ENCODE measurements at regions of chr4 and their contacts with region 1.

Region 1: DNA sequence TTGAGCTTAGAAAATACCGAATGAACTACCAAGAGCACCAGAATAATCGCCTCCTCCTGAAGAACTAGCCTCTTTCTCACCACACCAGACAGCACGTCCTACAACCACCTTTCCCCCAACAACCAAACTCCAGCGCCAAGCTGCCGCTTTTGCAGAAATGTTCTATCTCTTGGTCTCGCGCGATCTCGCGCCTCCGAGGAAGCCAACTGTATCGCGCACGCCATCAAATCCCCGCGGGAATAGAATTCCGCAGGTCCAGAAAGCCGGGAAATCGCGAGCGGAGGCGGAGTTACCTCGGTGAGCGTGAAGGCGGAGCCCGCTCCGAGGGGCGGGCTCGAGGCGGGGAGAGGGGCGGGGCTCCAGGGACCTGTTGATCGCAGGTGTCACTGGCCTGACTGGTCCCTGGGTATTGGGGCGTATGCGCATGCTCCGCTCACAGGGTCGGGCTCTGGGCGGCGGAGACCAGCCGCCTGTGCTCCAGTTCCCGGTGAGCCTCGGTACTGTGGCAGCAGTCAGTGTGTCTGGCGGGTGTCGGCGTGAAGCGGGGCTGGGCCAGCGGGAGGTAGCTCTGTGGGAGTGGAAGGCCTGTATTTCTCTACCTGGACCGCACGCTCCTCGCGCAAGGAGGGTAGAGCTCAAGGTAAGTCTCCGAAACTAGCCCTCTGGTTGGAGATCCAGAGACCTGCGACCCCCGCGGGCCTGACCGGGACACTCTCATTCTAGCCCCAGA is at the start of gene USP53:
- DNase-seq: peak; percentile 98
- ATAC-seq: peak; percentile 92
- H3K4me3 ChIP-seq: peak within 1 kb of the TSS; percentile 65 to 91 (median 76)
- H3K4me3 Mint-ChIP-seq: peak within 1 kb of the TSS; percentile 95
- H3K27ac ChIP-seq: peak within 1 kb of the TSS; percentile 76 to 81
- H3K27ac Mint-ChIP-seq: peak within 1 kb of the TSS; percentile 96
- H3K4me1 ChIP-seq: peaks cover 2 to 15% of the 10 kb centered on the region in 2 donors
- H3K4me1 Mint-ChIP-seq: peaks cover 39% of the 10 kb centered on the region
- H3K27me3 ChIP-seq: no peaks in the 10 kb centered on the region
- H3K27me3 Mint-ChIP-seq: no peaks in the 10 kb centered on the region
- CTCF ChIP-seq: no peak
- total RNA-seq, gene USP53: 45.0 and 57.1 TPM in 2 replicates

Region 2: DNA sequence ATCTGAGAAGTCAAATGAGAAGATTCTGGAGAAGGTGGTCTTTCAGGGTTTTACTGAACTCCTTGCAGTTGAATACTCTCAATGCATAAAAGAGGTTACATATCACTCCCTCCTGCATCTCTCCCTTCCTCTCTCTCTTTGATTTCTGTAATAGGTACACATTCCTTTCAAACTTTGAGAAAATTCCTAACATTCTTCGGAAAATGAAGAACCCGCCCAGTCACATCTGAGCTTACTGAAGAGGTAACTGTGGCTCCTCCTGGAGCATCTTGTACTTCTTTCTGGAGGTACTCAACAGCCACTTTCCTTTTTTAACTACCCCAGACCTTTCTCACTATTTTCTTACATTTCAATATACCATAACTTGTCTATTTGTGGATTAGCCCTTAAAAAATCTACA is 1153.4 kb before region 1 on chr4:
- CTCF ChIA-PET with region 1: no interaction called
- POLR2A ChIA-PET with region 1: no interaction called
- intact Hi-C with region 1: no loop called
- DNase-seq: no peak
- ATAC-seq: no peak
- H3K4me3 ChIP-seq: no peak overlapping the region
- H3K4me3 Mint-ChIP-seq: no peak overlapping the region
- H3K27ac ChIP-seq: no peak overlapping the region
- H3K27ac Mint-ChIP-seq: no peak overlapping the region
- H3K4me1 ChIP-seq: no peaks in the 10 kb centered on the region
- H3K4me1 Mint-ChIP-seq: no peaks in the 10 kb centered on the region
- H3K27me3 ChIP-seq: no peaks in the 10 kb centered on the region
- H3K27me3 Mint-ChIP-seq: no peaks in the 10 kb centered on the region
- CTCF ChIP-seq: no peak

Region 3: DNA sequence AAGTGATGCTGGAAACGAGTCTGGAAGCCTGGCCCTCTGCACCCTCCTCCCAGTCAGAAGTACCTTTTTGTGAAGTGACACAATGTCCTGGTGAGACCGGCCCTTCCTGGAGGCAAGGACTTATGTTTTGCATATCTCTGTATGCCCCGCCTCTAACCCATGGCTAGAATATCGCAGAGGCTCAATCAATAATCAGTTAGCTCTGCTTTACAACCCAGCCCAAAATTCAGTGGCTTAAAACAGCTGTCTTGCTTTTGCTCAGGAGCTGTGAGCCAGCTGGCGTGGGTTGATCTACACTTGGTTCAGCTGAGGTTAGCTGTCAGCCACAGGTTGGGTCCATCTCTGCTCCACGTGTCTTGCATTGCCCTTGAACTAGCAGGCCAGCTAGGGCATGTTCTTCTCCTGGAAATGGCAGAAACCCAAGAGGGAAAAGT is 626.0 kb before region 1 on chr4:
- CTCF ChIA-PET with region 1: no interaction called
- POLR2A ChIA-PET with region 1: no interaction called
- intact Hi-C with region 1: loop called (anchors 5 kb)
- DNase-seq: no peak
- ATAC-seq: no peak
- H3K4me3 ChIP-seq: no peak overlapping the region
- H3K4me3 Mint-ChIP-seq: no peak overlapping the region
- H3K27ac ChIP-seq: no peak overlapping the region
- H3K27ac Mint-ChIP-seq: no peak overlapping the region
- H3K4me1 ChIP-seq: peaks cover 0 to 6% of the 10 kb centered on the region in 2 donors
- H3K4me1 Mint-ChIP-seq: peaks cover 9% of the 10 kb centered on the region
- H3K27me3 ChIP-seq: peaks cover 0 to 15% (median 4%) of the 10 kb centered on the region in 4 experiments
- H3K27me3 Mint-ChIP-seq: peaks cover 27% of the 10 kb centered on the region
- CTCF ChIP-seq: no peak

Region 4: GRCh38 chr4:118760493-118760892 is 451.9 kb before region 1 on chr4:
- CTCF ChIA-PET with region 1: no interaction called
- POLR2A ChIA-PET with region 1: no interaction called
- intact Hi-C with region 1: loop called (anchors 1 kb)
- DNase-seq: peak; percentile 72
- ATAC-seq: peak; percentile 94
- H3K4me3 ChIP-seq: no peak overlapping the region
- H3K4me3 Mint-ChIP-seq: peak overlapping the region; percentile 17
- H3K27ac ChIP-seq: no peak overlapping the region
- H3K27ac Mint-ChIP-seq: peak overlapping the region; percentile 65
- H3K4me1 ChIP-seq: peaks cover 14 to 19% of the 10 kb centered on the region in 2 donors
- H3K4me1 Mint-ChIP-seq: peaks cover 26% of the 10 kb centered on the region
- H3K27me3 ChIP-seq: no peaks in the 10 kb centered on the region
- H3K27me3 Mint-ChIP-seq: no peaks in the 10 kb centered on the region
- CTCF ChIP-seq: no peak

Region 5: DNA sequence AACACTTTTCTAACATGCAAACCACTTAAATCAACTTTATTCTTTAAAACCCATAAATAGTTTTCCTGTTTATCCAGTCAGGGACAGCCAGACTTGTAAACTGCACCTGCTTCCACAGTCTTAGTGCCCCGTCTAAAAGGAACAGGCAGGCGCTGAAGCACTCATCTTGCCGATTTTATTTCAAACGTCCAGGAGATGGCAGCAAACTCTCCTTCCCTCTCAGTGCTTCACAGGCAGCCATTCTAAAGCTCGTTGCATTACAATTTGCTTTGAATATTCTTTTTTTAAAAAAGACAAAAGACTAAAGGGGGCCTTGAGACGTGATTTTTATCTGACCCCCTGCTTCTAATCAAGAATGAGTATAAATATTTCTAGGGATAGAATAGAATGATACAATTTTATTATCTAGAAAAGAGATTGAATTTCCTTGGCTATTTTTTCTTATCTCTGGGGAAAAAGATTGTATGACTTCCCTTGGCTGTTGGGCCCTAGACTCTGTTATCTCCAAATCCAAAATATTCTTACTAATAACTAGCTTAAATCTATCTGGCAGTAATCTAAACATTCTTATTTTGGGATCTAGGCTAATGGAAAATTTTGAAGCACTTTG is 170.3 kb before region 1 on chr4:
- CTCF ChIA-PET with region 1: interaction called, 16 read pairs
- POLR2A ChIA-PET with region 1: no interaction called
- intact Hi-C with region 1: loop called (anchors 2 kb)
- DNase-seq: peak; percentile 74
- ATAC-seq: peak; percentile 81
- H3K4me3 ChIP-seq: no peak overlapping the region
- H3K4me3 Mint-ChIP-seq: no peak overlapping the region
- H3K27ac ChIP-seq: no peak overlapping the region
- H3K27ac Mint-ChIP-seq: no peak overlapping the region
- H3K4me1 ChIP-seq: peaks cover 0 to 4% of the 10 kb centered on the region in 2 donors
- H3K4me1 Mint-ChIP-seq: peaks cover 6% of the 10 kb centered on the region
- H3K27me3 ChIP-seq: no peaks in the 10 kb centered on the region
- H3K27me3 Mint-ChIP-seq: no peaks in the 10 kb centered on the region
- CTCF ChIP-seq: peak; percentile 88

Region 6: DNA sequence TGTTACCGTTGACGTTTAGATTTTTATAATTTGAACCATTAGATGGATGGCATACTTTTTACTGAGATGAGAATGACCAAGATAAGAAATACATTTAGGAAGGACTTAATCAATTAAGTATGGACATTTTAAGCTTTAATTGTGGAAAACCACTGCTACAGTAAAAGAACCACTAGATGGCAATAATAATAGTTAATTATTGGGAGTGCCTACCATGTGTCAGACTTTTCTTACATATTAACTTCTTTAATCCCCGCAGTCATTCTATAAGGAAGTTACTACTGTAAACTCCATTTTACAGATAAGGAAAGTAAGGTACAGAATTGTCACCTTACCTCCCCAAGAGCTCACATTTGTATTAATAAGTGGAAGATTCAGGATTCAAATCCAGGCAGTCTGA is 125.3 kb before region 1 on chr4:
- CTCF ChIA-PET with region 1: interaction called, 10 read pairs
- POLR2A ChIA-PET with region 1: no interaction called
- intact Hi-C with region 1: loop called (anchors 5 kb)
- DNase-seq: no peak
- ATAC-seq: no peak
- H3K4me3 ChIP-seq: no peak overlapping the region
- H3K4me3 Mint-ChIP-seq: no peak overlapping the region
- H3K27ac ChIP-seq: no peak overlapping the region
- H3K27ac Mint-ChIP-seq: no peak overlapping the region
- H3K4me1 ChIP-seq: no peaks in the 10 kb centered on the region
- H3K4me1 Mint-ChIP-seq: peaks cover 28% of the 10 kb centered on the region
- H3K27me3 ChIP-seq: no peaks in the 10 kb centered on the region
- H3K27me3 Mint-ChIP-seq: peaks cover 7% of the 10 kb centered on the region
- CTCF ChIP-seq: no peak

Region 7: GRCh38 chr4:119300101-119300978 is 87.9 kb after region 1 on chr4:
- CTCF ChIA-PET with region 1: no interaction called
- POLR2A ChIA-PET with region 1: interaction called, 16 read pairs
- intact Hi-C with region 1: loop called (anchors 1 kb)
- DNase-seq: peak; percentile 95
- ATAC-seq: peak; percentile 93
- H3K4me3 ChIP-seq: peak overlapping the region; percentile 87 to 97 (median 94)
- H3K4me3 Mint-ChIP-seq: peak overlapping the region; percentile 92
- H3K27ac ChIP-seq: peak overlapping the region; percentile 91 to 92
- H3K27ac Mint-ChIP-seq: peak overlapping the region; percentile 95
- H3K4me1 ChIP-seq: peaks cover 17 to 21% of the 10 kb centered on the region in 2 donors
- H3K4me1 Mint-ChIP-seq: peaks cover 30% of the 10 kb centered on the region
- H3K27me3 ChIP-seq: no peaks in the 10 kb centered on the region
- H3K27me3 Mint-ChIP-seq: peaks cover 5% of the 10 kb centered on the region
- CTCF ChIP-seq: no peak

Region 8: DNA sequence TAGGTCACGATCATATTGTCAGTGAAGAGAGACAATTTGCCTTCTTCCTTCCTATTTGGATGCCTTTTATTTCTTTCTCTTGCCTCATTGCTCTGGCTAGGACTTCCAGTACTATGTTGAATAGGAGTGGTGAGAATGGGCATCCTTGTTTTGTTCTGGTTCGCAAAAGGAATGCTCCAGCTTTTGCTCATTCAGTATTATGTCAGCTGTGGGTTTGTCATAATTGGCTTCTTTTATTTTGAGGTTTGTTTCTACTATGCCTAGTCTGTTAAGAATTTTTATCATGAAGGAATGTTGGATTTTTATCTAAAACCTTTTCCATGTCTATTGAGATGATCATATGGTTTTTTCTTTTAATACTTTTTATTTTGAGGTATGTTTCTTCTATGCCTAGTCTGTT is 1006.6 kb after region 1 on chr4:
- CTCF ChIA-PET with region 1: no interaction called
- POLR2A ChIA-PET with region 1: no interaction called
- intact Hi-C with region 1: no loop called
- DNase-seq: no peak
- ATAC-seq: no peak
- H3K4me3 ChIP-seq: no peak overlapping the region
- H3K4me3 Mint-ChIP-seq: no peak overlapping the region
- H3K27ac ChIP-seq: no peak overlapping the region
- H3K27ac Mint-ChIP-seq: no peak overlapping the region
- H3K4me1 ChIP-seq: no peaks in the 10 kb centered on the region
- H3K4me1 Mint-ChIP-seq: no peaks in the 10 kb centered on the region
- H3K27me3 ChIP-seq: no peaks in the 10 kb centered on the region
- H3K27me3 Mint-ChIP-seq: no peaks in the 10 kb centered on the region
- CTCF ChIP-seq: no peak